GM12878 (cell line): ENCODE measurements at regions of chr10 and their contacts with region 1.

Region 1: GRCh38 chr10:133329491-133330202 is 7.0 kb downstream of the CALY start:
- DNase-seq: no peak
- ATAC-seq: peak; percentile 98
- H3K4me3 ChIP-seq: no peak overlapping the region
- H3K27ac ChIP-seq: no peak overlapping the region
- H3K4me1 ChIP-seq: no peaks in the 10 kb centered on the region
- H3K27me3 ChIP-seq: peaks cover 5 to 9% of the 10 kb centered on the region in 2 experiments
- CTCF ChIP-seq: peak; percentile 92 to 95 (median 93)
- EP300 ChIP-seq: no peak
- POLR2A ChIP-seq: no peak
- RAD21 ChIP-seq: peak; percentile 92

Region 2: GRCh38 chr10:132929953-132930548 is 399.6 kb before region 1 on chr10:
- CTCF ChIA-PET with region 1: no interaction called
- POLR2A ChIA-PET with region 1: no interaction called
- RAD21 ChIA-PET with region 1: no interaction called
- SMC1A ChIA-PET with region 1: no interaction called
- in situ Hi-C with region 1: no loop called
- intact Hi-C with region 1: no loop called
- DNase-seq: peak; percentile 43
- ATAC-seq: peak; percentile 53
- H3K4me3 ChIP-seq: no peak overlapping the region
- H3K27ac ChIP-seq: no peak overlapping the region
- H3K4me1 ChIP-seq: peaks cover 3% of the 10 kb centered on the region; the same call in 1 of the 2 replicates
- H3K27me3 ChIP-seq: no peaks in the 10 kb centered on the region
- CTCF ChIP-seq: no peak
- EP300 ChIP-seq: no peak
- POLR2A ChIP-seq: no peak
- RAD21 ChIP-seq: no peak

Region 3: GRCh38 chr10:133292919-133293809 is 36.5 kb before region 1 on chr10:
- CTCF ChIA-PET with region 1: no interaction called
- POLR2A ChIA-PET with region 1: no interaction called
- RAD21 ChIA-PET with region 1: no interaction called
- SMC1A ChIA-PET with region 1: no interaction called
- in situ Hi-C with region 1: no loop called
- intact Hi-C with region 1: no loop called
- DNase-seq: no peak
- ATAC-seq: no peak
- H3K4me3 ChIP-seq: no peak overlapping the region
- H3K27ac ChIP-seq: no peak overlapping the region
- H3K4me1 ChIP-seq: no peaks in the 10 kb centered on the region
- H3K27me3 ChIP-seq: no peaks in the 10 kb centered on the region
- CTCF ChIP-seq: no peak
- EP300 ChIP-seq: no peak
- POLR2A ChIP-seq: peak; percentile 40; the same call in 1 of the 2 replicates
- RAD21 ChIP-seq: no peak

Region 4: GRCh38 chr10:133309111-133309719 is 20.4 kb before region 1 on chr10:
- CTCF ChIA-PET with region 1: interaction called, 14 read pairs
- POLR2A ChIA-PET with region 1: no interaction called
- RAD21 ChIA-PET with region 1: interaction called, 3 read pairs
- SMC1A ChIA-PET with region 1: no interaction called
- in situ Hi-C with region 1: no loop called
- intact Hi-C with region 1: no loop called
- DNase-seq: peak; percentile 39
- ATAC-seq: peak; percentile 86
- H3K4me3 ChIP-seq: peak overlapping the region; percentile 95
- H3K27ac ChIP-seq: peak overlapping the region; percentile 95
- H3K4me1 ChIP-seq: peaks cover 19% of the 10 kb centered on the region
- H3K27me3 ChIP-seq: no peaks in the 10 kb centered on the region
- CTCF ChIP-seq: no peak
- EP300 ChIP-seq: no peak
- POLR2A ChIP-seq: no peak
- RAD21 ChIP-seq: no peak

Region 5: DNA sequence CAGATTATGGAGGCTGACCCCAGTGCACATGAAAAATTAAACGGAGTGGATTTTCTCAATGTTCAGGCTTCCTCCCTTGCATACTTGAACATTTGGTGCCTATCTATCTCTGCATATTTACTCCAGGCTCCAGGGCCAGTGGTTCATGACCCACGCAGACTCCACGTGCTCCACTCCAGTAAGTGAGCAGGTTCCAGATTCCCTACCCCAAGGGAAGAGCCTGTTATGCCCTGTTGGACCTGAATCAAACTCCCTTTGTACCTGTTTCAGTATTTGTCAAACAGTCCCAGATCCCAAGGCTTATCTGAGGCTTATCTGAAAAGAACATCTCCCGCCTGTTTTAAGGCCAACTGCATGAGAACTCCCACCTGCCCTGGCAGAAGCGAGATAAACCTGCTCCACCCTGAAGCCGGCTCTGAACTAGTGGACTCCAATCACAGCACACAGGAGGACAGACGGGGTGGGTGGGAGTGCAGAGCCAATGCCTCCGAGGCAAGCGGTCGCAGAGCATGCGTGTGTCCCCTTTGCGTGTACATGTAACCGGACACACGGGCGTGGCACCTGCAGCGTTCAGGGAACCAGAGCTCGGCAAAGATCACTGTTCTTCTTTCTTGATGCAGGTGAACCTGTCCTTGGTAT is 30.4 kb after region 1 on chr10:
- CTCF ChIA-PET with region 1: interaction called, 14 read pairs
- POLR2A ChIA-PET with region 1: no interaction called
- RAD21 ChIA-PET with region 1: interaction called, 3 read pairs
- SMC1A ChIA-PET with region 1: interaction called, 3 read pairs
- in situ Hi-C with region 1: no loop called
- intact Hi-C with region 1: no loop called
- DNase-seq: no peak
- ATAC-seq: no peak
- H3K4me3 ChIP-seq: no peak overlapping the region
- H3K27ac ChIP-seq: no peak overlapping the region
- H3K4me1 ChIP-seq: peaks cover 18% of the 10 kb centered on the region
- H3K27me3 ChIP-seq: no peaks in the 10 kb centered on the region
- CTCF ChIP-seq: no peak
- EP300 ChIP-seq: no peak
- POLR2A ChIP-seq: no peak
- RAD21 ChIP-seq: no peak

Region 6: GRCh38 chr10:133438711-133439273 is 109.1 kb after region 1 on chr10:
- CTCF ChIA-PET with region 1: interaction called, 36 read pairs
- POLR2A ChIA-PET with region 1: no interaction called
- RAD21 ChIA-PET with region 1: interaction called, 12 read pairs
- SMC1A ChIA-PET with region 1: interaction called, 6 read pairs
- in situ Hi-C with region 1: no loop called
- intact Hi-C with region 1: no loop called
- DNase-seq: peak; percentile 16
- ATAC-seq: peak; percentile 90
- H3K4me3 ChIP-seq: no peak overlapping the region
- H3K27ac ChIP-seq: no peak overlapping the region
- H3K4me1 ChIP-seq: no peaks in the 10 kb centered on the region
- H3K27me3 ChIP-seq: no peaks in the 10 kb centered on the region
- CTCF ChIP-seq: peak; percentile 40 to 58 (median 43); a peak in 5 of 6 replicates
- EP300 ChIP-seq: no peak
- POLR2A ChIP-seq: no peak
- RAD21 ChIP-seq: peak; percentile 41

Region 7: DNA sequence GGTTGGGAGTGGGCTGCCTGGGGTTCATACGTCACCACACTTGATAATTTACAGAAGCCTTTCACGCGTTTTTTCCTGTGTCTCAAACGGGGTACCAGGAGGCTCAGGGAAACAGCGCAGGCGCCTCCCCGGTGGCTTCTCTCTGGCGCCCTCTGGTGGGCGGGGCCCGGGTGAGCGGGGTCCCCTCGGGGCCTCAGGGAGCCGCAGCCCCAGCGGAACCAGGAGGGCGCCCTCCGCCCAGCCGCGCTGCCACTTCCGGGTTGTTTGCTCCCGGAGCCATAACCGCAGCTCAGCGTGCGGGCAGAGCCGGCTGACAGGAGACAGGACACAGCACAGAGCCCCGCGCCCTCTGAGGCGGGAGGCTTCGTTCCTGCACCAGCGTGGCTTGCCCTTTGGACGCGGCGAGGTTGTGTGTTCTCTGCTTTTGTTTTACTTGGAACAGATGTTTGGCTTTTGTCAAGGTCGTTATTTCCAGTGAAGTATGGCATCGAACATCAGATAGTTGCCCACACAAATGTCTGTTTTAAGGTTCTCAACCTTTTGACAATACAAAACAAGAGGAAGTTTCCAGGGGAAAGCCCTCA is 190.6 kb after region 1 on chr10:
- CTCF ChIA-PET with region 1: interaction called, 24 read pairs
- POLR2A ChIA-PET with region 1: interaction called, 3 read pairs
- RAD21 ChIA-PET with region 1: no interaction called
- SMC1A ChIA-PET with region 1: no interaction called
- in situ Hi-C with region 1: no loop called
- intact Hi-C with region 1: no loop called
- DNase-seq: peak; percentile 16
- ATAC-seq: peak; percentile 100
- H3K4me3 ChIP-seq: peak overlapping the region; percentile 20; the same call in 1 of the 2 replicates
- H3K27ac ChIP-seq: no peak overlapping the region
- H3K4me1 ChIP-seq: no peaks in the 10 kb centered on the region
- H3K27me3 ChIP-seq: no peaks in the 10 kb centered on the region
- CTCF ChIP-seq: peak; percentile 70 to 85 (median 77)
- EP300 ChIP-seq: no peak
- POLR2A ChIP-seq: peak; percentile 71
- RAD21 ChIP-seq: peak; percentile 47